ENCODE measurements at regions of chr20 and their contacts with region 1.

Region 1: DNA sequence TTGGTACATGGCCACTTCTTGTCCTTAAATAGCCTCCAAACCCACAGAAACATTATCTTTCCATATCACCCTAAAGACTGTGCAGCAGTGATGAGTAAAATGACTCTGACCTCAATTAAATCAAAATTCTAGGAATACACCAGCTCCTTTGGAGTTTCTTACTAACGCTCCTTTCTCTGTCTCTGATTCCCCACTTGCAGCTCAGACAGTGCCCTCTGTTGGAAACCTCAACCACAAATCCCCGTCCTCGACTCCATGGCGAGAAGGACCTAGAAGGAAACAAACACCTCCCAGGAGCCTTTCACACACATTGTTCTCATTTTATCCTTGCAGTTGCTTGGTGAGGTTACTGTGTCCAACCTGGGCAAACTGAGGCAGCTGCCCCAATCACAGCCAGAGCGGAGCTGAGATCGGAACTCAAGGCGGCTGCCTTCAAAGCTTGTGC is 17.7 kb upstream of the PARD6B start:
- DNase-seq: no peak
- H3K4me3 ChIP-seq: no peak overlapping the region
- H3K27ac ChIP-seq: no peak overlapping the region
- H3K4me1 ChIP-seq: peaks cover 3% of the 10 kb centered on the region
- H3K27me3 ChIP-seq: no peaks in the 10 kb centered on the region
- CTCF ChIP-seq: peak; percentile 13 to 54

Region 2: GRCh38 chr20:50632236-50632635 is 81.4 kb before region 1 on chr20:
- CTCF ChIA-PET with region 1: no interaction called
- dilution Hi-C with region 1: loop called (anchors 5 kb)
- in situ Hi-C with region 1: no loop called
- intact Hi-C with region 1: no loop called
- DNase-seq: no peak
- H3K4me3 ChIP-seq: no peak overlapping the region
- H3K27ac ChIP-seq: no peak overlapping the region
- H3K4me1 ChIP-seq: peaks cover 11% of the 10 kb centered on the region
- H3K27me3 ChIP-seq: no peaks in the 10 kb centered on the region
- CTCF ChIP-seq: no peak

Region 3: GRCh38 chr20:50668326-50668725 is 45.4 kb before region 1 on chr20:
- CTCF ChIA-PET with region 1: no interaction called
- dilution Hi-C with region 1: loop called (anchors 5 kb)
- in situ Hi-C with region 1: no loop called
- intact Hi-C with region 1: no loop called
- DNase-seq: no peak
- H3K4me3 ChIP-seq: no peak overlapping the region
- H3K27ac ChIP-seq: no peak overlapping the region
- H3K4me1 ChIP-seq: peaks cover under 1% of the 10 kb centered on the region
- H3K27me3 ChIP-seq: no peaks in the 10 kb centered on the region
- CTCF ChIP-seq: no peak

Measured in mammary epithelial cell (primary cell).